ENCODE measurements at regions of chr2 and their contacts with region 1.

Region 1: GRCh38 chr2:135985018-135985825 is at the start of gene DARS1:
- DNase-seq: peak; percentile 81 to 85
- ATAC-seq: peak; percentile 87 to 94
- H3K4me3 ChIP-seq: peak within 1 kb of the TSS; percentile 94 to 97 (median 96)
- H3K27ac ChIP-seq: peak within 1 kb of the TSS; percentile 95 to 99 (median 98)
- H3K4me1 ChIP-seq: peaks cover 13 to 28% of the 10 kb centered on the region in 2 donors
- H3K27me3 ChIP-seq: no peaks in the 10 kb centered on the region
- CTCF ChIP-seq: no peak
- POLR2A ChIP-seq: peak; percentile 82 to 85
- total RNA-seq, gene DARS1: 86.2 to 97.2 (median 89.8) TPM

Region 2: GRCh38 chr2:134918526-134919340 is 1066.5 kb before region 1 on chr2 and contains the start of gene CCNT2:
- in situ Hi-C with region 1: no loop called
- intact Hi-C with region 1: loop called (anchors 5 kb)
- DNase-seq: peak; percentile 97 to 99
- ATAC-seq: peak; percentile 86 to 89
- H3K4me3 ChIP-seq: peak within 1 kb of the TSS; percentile 96 to 99 (median 96)
- H3K27ac ChIP-seq: peak within 1 kb of the TSS; percentile 99 to 100 (median 100)
- H3K4me1 ChIP-seq: peaks cover 41 to 45% of the 10 kb centered on the region in 2 donors
- H3K27me3 ChIP-seq: no peaks in the 10 kb centered on the region
- CTCF ChIP-seq: peak in 3 of 5 experiments; percentile 22 to 34 (median 22)
- POLR2A ChIP-seq: peak; percentile 17 to 44
- total RNA-seq, gene CCNT2: 11.6 to 28.4 (median 18.6) TPM

Region 3: DNA sequence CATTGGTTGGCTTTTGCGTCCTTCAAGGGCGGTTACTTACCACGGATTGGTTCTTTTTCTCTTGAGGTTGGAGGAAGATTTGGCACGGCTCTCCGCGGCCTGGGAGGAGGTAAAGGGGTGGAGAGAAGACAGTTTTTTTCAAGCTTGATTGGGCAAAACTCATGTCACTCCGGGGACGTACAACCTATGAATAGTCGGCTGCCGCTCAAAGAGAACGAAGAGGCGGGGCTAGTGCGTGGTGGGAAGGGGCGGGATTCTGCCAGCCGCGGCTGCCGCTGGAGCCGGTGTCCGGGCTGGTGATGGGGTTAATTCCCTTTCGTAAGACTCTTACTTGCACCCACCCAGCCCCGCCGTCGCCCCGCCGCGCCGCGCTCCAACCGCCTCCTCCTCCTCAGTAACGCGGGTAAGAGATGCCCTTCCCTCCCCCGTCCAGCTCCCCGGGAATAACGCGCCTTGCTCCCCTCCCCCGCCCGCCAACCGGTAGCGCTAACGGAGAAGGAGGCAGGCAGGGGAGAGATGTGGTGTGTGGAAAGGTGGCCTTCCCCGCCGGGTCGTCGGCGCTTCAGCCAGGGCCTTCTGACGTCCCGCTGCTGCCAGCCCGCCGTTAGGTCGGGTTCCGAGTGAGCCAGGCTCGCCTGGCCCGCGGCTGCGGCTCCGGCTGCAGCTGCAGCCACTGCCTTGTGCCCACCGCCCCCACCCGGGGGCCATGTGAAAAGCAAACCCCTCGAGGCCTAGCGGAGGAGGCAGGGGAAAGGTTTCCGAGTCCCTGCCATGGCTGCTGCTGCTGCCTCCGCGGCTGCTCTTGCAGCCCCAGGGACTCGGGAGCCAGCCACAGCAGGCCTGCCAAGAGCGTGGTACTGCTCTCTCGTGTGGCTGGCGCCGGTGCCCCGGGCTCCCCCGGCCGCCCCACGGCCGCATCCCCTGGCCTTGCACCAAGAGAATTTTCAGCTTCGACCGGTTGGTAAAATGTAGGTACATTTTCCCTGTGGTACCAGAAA is 453.7 kb before region 1 on chr2 and contains the start of gene R3HDM1:
- in situ Hi-C with region 1: loop called in 1 of 4 experiments (anchors 25 kb)
- intact Hi-C with region 1: no loop called
- DNase-seq: peak; percentile 100
- ATAC-seq: peak; percentile 90 to 95
- H3K4me3 ChIP-seq: peak within 1 kb of the TSS; percentile 75 to 89 (median 80)
- H3K27ac ChIP-seq: peak within 1 kb of the TSS; percentile 83 to 98 (median 92)
- H3K4me1 ChIP-seq: peaks cover 14 to 25% of the 10 kb centered on the region in 2 donors
- H3K27me3 ChIP-seq: no peaks in the 10 kb centered on the region
- CTCF ChIP-seq: peak in 1 of 5 experiments; percentile 8
- POLR2A ChIP-seq: peak; percentile 48 to 54
- total RNA-seq, gene R3HDM1: 13.5 to 35.7 (median 19.1) TPM

Region 4: GRCh38 chr2:135876066-135876711 is 109.0 kb before region 1 on chr2 and contains the start of gene MCM6:
- in situ Hi-C with region 1: no loop called
- intact Hi-C with region 1: loop called (anchors 1 kb)
- DNase-seq: peak; percentile 95 to 97
- ATAC-seq: peak; percentile 98 to 100
- H3K4me3 ChIP-seq: peak within 1 kb of the TSS; percentile 74 to 93 (median 78)
- H3K27ac ChIP-seq: peak within 1 kb of the TSS; percentile 80 to 90 (median 87)
- H3K4me1 ChIP-seq: peaks cover 6 to 13% of the 10 kb centered on the region in 2 donors
- H3K27me3 ChIP-seq: no peaks in the 10 kb centered on the region
- CTCF ChIP-seq: peak in 3 of 5 experiments; percentile 10 to 46 (median 34)
- POLR2A ChIP-seq: peak; percentile 44 to 65
- total RNA-seq, gene MCM6: 4.2 to 6.3 (median 4.8) TPM

Region 5: GRCh38 chr2:136019306-136019705 is 34.1 kb after region 1 on chr2:
- in situ Hi-C with region 1: no loop called
- intact Hi-C with region 1: loop called (anchors 5 kb)
- DNase-seq: no peak
- ATAC-seq: no peak
- H3K4me3 ChIP-seq: peak overlapping the region in 1 of 4 donors; percentile 22
- H3K27ac ChIP-seq: no peak overlapping the region
- H3K4me1 ChIP-seq: peaks cover 18% of the 10 kb centered on the region in 2 donors
- H3K27me3 ChIP-seq: no peaks in the 10 kb centered on the region
- CTCF ChIP-seq: no peak
- POLR2A ChIP-seq: no peak

Region 6: DNA sequence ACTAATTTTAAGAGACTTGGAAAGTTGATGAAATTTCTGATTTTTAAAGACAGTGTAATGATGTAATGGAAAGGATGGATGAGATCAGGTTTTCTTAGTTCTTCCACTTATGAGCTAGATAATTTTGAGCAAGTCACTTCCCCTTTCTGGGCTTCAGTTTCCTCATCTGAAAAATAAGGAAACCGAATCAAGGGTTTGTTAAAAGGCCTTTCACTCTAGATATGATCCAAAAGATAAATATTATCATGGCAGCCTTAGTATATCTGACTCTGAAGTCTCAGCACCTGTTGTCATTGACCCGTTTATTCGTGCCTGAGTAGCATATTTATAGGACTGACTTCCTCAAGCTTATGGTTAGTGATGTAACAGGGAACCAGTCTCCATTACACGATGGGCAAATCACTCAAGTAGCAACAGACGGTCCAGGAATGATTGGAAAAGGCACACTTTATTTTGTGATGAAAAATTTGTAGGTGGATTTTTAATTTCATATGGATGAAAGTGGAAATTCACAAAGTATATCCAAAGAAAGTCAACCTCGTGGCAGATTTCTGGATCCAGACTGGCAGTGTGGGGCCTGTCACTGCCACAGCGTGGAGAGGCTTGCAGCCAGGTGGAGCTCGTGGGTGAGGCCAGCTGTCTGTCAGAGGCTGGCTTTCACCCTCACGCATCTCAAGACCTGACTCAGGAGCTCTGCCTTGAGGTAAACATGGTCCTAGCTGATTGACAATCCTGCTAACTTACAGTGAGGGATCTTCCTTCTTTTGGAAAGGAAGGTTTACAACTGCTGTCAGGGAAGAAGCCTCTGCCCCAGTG is 270.6 kb after region 1 on chr2:
- in situ Hi-C with region 1: no loop called
- intact Hi-C with region 1: no loop called
- DNase-seq: no peak
- ATAC-seq: no peak
- H3K4me3 ChIP-seq: no peak overlapping the region
- H3K27ac ChIP-seq: no peak overlapping the region
- H3K4me1 ChIP-seq: no peaks in the 10 kb centered on the region
- H3K27me3 ChIP-seq: no peaks in the 10 kb centered on the region
- CTCF ChIP-seq: no peak
- POLR2A ChIP-seq: no peak

Region 7: GRCh38 chr2:136407952-136408318 is 422.7 kb after region 1 on chr2:
- in situ Hi-C with region 1: no loop called
- intact Hi-C with region 1: no loop called
- DNase-seq: no peak
- ATAC-seq: no peak
- H3K4me3 ChIP-seq: no peak overlapping the region
- H3K27ac ChIP-seq: no peak overlapping the region
- H3K4me1 ChIP-seq: no peaks in the 10 kb centered on the region
- H3K27me3 ChIP-seq: peaks cover 0 to 4% (median 0%) of the 10 kb centered on the region in 3 donors
- CTCF ChIP-seq: no peak
- POLR2A ChIP-seq: no peak

Measured in gastrocnemius medialis (tissue), 4 donors.